ENCODE measurements at regions of chr7 and their contacts with region 1.

Region 1: DNA sequence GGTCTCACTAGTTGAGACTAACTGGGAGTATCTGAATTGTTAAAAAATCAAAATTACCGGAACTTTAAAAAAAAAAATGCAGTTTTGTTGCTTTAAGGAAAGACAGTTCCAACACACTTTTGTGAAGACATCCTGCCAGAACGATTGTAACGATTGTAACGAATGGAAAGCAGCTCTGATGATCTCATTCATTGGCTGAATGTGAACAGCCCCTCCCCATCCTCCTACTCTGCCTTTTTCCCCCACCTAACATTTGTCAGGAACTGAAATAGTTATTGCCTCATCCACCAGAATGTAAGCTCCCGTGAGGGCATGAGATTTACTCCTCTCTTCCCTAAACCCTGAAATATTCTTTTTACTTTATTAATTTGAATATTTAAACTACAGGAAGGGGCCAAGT is 23.1 kb upstream of the ZC3HAV1L start:
- DNase-seq: no peak
- ATAC-seq: no peak
- H3K4me3 ChIP-seq: no peak overlapping the region
- H3K4me3 Mint-ChIP-seq: no peak overlapping the region
- H3K27ac ChIP-seq: no peak overlapping the region
- H3K27ac Mint-ChIP-seq: peak overlapping the region in 1 of 2 donors; percentile 64
- H3K4me1 ChIP-seq: peaks cover 3 to 9% of the 10 kb centered on the region in 2 experiments
- H3K4me1 Mint-ChIP-seq: peaks cover 40 to 58% (median 47%) of the 10 kb centered on the region in 3 donors
- H3K27me3 ChIP-seq: no peaks in the 10 kb centered on the region
- H3K27me3 Mint-ChIP-seq: no peaks in the 10 kb centered on the region

Region 2: GRCh38 chr7:137975221-137975620 is 1083.7 kb before region 1 on chr7:
- CTCF ChIA-PET with region 1: no interaction called
- POLR2A ChIA-PET with region 1: no interaction called
- DNase-seq: no peak
- ATAC-seq: no peak
- H3K4me3 ChIP-seq: no peak overlapping the region
- H3K4me3 Mint-ChIP-seq: no peak overlapping the region
- H3K27ac ChIP-seq: no peak overlapping the region
- H3K27ac Mint-ChIP-seq: no peak overlapping the region
- H3K4me1 ChIP-seq: no peaks in the 10 kb centered on the region
- H3K4me1 Mint-ChIP-seq: peaks cover 0 to 12% (median 6%) of the 10 kb centered on the region in 3 donors
- H3K27me3 ChIP-seq: no peaks in the 10 kb centered on the region
- H3K27me3 Mint-ChIP-seq: no peaks in the 10 kb centered on the region

Region 3: GRCh38 chr7:138970952-138971351 is 88.0 kb before region 1 on chr7:
- CTCF ChIA-PET with region 1: no interaction called
- POLR2A ChIA-PET with region 1: interaction called in 1 of 2 experiments, 10 read pairs
- DNase-seq: no peak
- ATAC-seq: no peak
- H3K4me3 ChIP-seq: no peak overlapping the region
- H3K4me3 Mint-ChIP-seq: no peak overlapping the region
- H3K27ac ChIP-seq: no peak overlapping the region
- H3K27ac Mint-ChIP-seq: no peak overlapping the region
- H3K4me1 ChIP-seq: no peaks in the 10 kb centered on the region
- H3K4me1 Mint-ChIP-seq: no peaks in the 10 kb centered on the region
- H3K27me3 ChIP-seq: peaks cover 0 to 18% of the 10 kb centered on the region in 2 experiments
- H3K27me3 Mint-ChIP-seq: peaks cover 12 to 15% of the 10 kb centered on the region in 2 donors